ENCODE measurements at regions of chr3 and their contacts with region 1.

Region 1: GRCh38 chr3:107660306-107660976 is 137.7 kb downstream of the BBX start:
- DNase-seq: peak; percentile 43
- ATAC-seq: no peak
- H3K4me3 ChIP-seq: no peak overlapping the region
- H3K27ac ChIP-seq: no peak overlapping the region
- H3K4me1 ChIP-seq: peaks cover 18% of the 10 kb centered on the region; the same call in 1 of the 2 replicates
- H3K27me3 ChIP-seq: no peaks in the 10 kb centered on the region
- CTCF ChIP-seq: peak; percentile 89

Region 2: DNA sequence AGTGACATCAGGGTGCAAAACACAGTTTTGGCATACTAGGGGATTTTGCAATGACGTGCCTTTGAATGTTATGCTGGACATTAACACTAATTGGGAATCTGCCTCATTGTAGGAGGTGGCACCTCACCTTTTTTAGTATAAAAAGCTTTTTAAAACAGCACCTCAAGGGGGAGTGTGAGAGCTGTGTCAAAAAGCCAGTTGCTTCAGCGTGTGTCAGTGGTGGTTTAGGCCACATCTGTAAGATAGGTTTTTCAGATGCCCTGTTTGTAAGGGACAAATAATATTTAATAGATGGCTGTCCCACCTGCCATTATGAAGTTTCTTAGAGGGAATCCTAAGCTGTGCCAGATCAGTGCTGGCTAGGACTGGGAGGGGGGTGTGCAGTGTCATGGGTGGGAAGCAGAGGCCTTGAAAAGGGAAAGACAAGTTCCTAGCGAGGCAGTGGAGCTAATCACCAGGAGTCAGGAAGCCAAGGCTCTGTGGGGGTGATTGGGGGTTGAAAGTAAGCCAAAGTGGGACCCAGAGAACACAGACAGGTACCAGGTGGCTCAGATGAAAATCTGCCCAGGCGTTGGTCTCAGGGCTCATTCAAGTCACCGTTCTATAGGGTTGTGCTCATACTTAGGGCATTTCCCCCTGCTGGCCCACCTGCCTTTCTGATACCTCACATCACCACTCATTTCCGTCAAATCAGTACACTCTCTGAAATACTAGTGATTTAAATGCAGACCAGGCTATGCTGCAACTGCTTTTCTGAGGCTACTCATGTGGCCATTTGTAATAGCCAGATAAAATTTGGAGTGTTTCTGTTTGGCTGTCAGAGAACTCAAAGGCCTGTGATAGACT is 17.2 kb before region 1 on chr3:
- CTCF ChIA-PET with region 1: interaction called, 5 read pairs
- POLR2A ChIA-PET with region 1: interaction called, 11 read pairs
- intact Hi-C with region 1: no loop called
- DNase-seq: peak; percentile 31
- ATAC-seq: peak; percentile 35
- H3K4me3 ChIP-seq: no peak overlapping the region
- H3K27ac ChIP-seq: no peak overlapping the region
- H3K4me1 ChIP-seq: peaks cover 7% of the 10 kb centered on the region; the same call in 1 of the 2 replicates
- H3K27me3 ChIP-seq: no peaks in the 10 kb centered on the region
- CTCF ChIP-seq: peak; percentile 59

Region 3: GRCh38 chr3:107676469-107677309 is 16.2 kb after region 1 on chr3:
- CTCF ChIA-PET with region 1: interaction called, 11 read pairs
- POLR2A ChIA-PET with region 1: no interaction called
- intact Hi-C with region 1: no loop called
- DNase-seq: peak; percentile 72
- ATAC-seq: peak; percentile 68
- H3K4me3 ChIP-seq: no peak overlapping the region
- H3K27ac ChIP-seq: no peak overlapping the region
- H3K4me1 ChIP-seq: no peaks in the 10 kb centered on the region
- H3K27me3 ChIP-seq: no peaks in the 10 kb centered on the region
- CTCF ChIP-seq: peak; percentile 76

Region 4: GRCh38 chr3:107690522-107691138 is 30.2 kb after region 1 on chr3:
- CTCF ChIA-PET with region 1: interaction called, 11 read pairs
- POLR2A ChIA-PET with region 1: no interaction called
- intact Hi-C with region 1: no loop called
- DNase-seq: peak; percentile 84
- ATAC-seq: peak; percentile 77
- H3K4me3 ChIP-seq: no peak overlapping the region
- H3K27ac ChIP-seq: no peak overlapping the region
- H3K4me1 ChIP-seq: no peaks in the 10 kb centered on the region
- H3K27me3 ChIP-seq: no peaks in the 10 kb centered on the region
- CTCF ChIP-seq: peak; percentile 72

Region 5: DNA sequence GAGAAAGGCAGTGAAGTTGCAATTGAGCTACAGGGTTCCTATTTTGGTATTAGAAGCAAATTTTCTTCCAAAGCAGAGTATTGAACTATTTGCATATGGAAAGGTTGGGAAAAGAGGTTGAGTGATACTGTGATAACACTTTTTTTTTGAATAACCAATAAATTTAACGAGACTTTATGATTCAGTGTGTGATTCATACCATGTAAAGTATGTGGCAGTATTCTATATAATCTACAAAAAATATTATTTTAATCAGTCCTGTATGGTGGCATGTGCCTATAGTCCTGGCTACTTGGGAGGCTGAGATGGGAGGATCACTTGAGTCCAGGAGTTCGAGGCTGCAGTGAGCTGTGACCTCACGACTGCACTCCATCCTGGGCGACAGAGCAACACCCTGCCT is 69.2 kb after region 1 on chr3:
- CTCF ChIA-PET with region 1: no interaction called
- POLR2A ChIA-PET with region 1: no interaction called
- intact Hi-C with region 1: no loop called
- DNase-seq: peak; percentile 36
- ATAC-seq: peak; percentile 88
- H3K4me3 ChIP-seq: no peak overlapping the region
- H3K27ac ChIP-seq: no peak overlapping the region
- H3K4me1 ChIP-seq: peaks cover 5% of the 10 kb centered on the region
- H3K27me3 ChIP-seq: no peaks in the 10 kb centered on the region
- CTCF ChIP-seq: no peak

Region 6: DNA sequence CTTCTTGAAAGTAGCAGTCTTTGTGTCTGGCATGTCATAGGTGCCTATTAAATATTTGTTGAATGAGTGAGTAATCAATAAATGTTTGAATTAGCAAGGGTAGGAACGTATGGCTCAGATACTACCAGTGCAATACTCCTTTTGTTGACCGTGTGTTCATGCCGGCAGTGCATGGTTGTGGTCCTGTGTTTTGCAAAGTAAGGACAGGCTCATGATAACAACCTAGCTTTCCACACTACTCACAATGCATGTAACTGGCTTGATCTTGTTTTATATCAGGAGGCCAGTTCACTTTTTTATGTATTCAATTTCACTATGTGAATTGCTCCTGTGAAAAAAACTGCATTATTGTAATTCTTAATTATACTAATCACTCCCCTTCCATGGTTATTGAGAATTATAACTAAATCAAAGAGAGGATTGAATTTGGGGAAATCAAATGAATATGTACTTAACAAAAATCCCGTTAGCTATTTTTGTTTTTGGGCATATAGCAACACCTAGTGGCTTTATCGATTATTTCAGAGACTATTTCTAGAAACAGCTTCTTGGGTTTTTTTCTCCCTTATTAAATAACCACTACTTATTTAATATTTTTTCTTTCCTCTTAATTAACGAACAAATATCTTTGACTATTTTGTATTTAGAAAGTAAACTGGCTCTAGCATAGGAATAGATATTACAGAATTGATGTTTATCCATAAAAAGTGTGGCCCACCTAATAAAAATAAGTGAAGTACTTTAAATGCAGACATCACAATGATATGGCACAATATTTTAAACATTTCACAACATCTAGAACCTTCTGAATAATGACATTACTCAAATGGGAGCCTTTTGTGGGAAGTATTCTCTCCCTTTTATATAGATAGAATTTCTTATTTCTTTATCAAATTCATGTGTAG is 80.8 kb after region 1 on chr3:
- CTCF ChIA-PET with region 1: interaction called, 4 read pairs
- POLR2A ChIA-PET with region 1: interaction called, 3 read pairs
- intact Hi-C with region 1: loop called (anchors 1 kb)
- DNase-seq: peak; percentile 61
- ATAC-seq: peak; percentile 78
- H3K4me3 ChIP-seq: no peak overlapping the region
- H3K27ac ChIP-seq: no peak overlapping the region
- H3K4me1 ChIP-seq: no peaks in the 10 kb centered on the region
- H3K27me3 ChIP-seq: no peaks in the 10 kb centered on the region
- CTCF ChIP-seq: peak; percentile 81

Region 7: GRCh38 chr3:107753480-107753879 is 93.0 kb after region 1 on chr3:
- CTCF ChIA-PET with region 1: interaction called, 16 read pairs
- POLR2A ChIA-PET with region 1: no interaction called
- intact Hi-C with region 1: no loop called
- DNase-seq: peak; percentile 63
- ATAC-seq: peak; percentile 50
- H3K4me3 ChIP-seq: no peak overlapping the region
- H3K27ac ChIP-seq: no peak overlapping the region
- H3K4me1 ChIP-seq: peaks cover 13% of the 10 kb centered on the region
- H3K27me3 ChIP-seq: no peaks in the 10 kb centered on the region
- CTCF ChIP-seq: peak; percentile 82

Region 8: GRCh38 chr3:107846279-107846852 is 185.9 kb after region 1 on chr3:
- CTCF ChIA-PET with region 1: no interaction called
- POLR2A ChIA-PET with region 1: no interaction called
- intact Hi-C with region 1: loop called (anchors 5 kb)
- DNase-seq: peak; percentile 80
- ATAC-seq: peak; percentile 94
- H3K4me3 ChIP-seq: peak overlapping the region; percentile 59
- H3K27ac ChIP-seq: no peak overlapping the region
- H3K4me1 ChIP-seq: peaks cover 14% of the 10 kb centered on the region
- H3K27me3 ChIP-seq: no peaks in the 10 kb centered on the region
- CTCF ChIP-seq: peak; percentile 90